SK-N-SH (cell line): ENCODE measurements at regions of chr16 and their contacts with region 1.

Region 1: GRCh38 chr16:77584205-77584859 is 138.0 kb upstream of the NUDT7 start:
- DNase-seq: peak; percentile 55
- H3K4me3 ChIP-seq: no peak overlapping the region; a peak in 1 of 4 replicates
- H3K27ac ChIP-seq: no peak overlapping the region
- H3K4me1 ChIP-seq: no peaks in the 10 kb centered on the region; a peak in 1 of 4 replicates
- H3K27me3 ChIP-seq: no peaks in the 10 kb centered on the region
- CTCF ChIP-seq: peak; percentile 95
- EP300 ChIP-seq: no peak
- RAD21 ChIP-seq: peak; percentile 93

Region 2: DNA sequence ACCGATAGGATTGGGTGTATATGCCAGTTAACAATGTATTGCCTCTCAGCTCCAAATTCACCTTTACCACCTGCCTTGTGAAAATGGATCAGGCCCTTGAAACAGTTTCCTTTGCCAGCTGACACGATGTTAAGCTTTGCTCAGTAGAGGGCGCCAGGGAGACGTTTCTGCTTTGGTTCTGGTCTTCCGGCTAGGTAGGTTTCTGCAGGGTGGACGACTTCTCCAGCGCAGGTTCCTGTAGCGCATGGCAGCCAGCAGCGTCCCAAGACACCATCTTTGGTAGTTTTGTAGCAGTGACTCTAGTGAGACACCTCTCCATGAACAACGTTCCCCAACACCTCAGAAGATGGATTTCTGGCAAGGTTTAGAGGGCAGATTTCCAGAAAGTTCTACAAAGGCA is 361.1 kb before region 1 on chr16:
- CTCF ChIA-PET with region 1: interaction called, 15 read pairs
- POLR2A ChIA-PET with region 1: no interaction called
- DNase-seq: peak; percentile 35
- H3K4me3 ChIP-seq: no peak overlapping the region; a peak in 1 of 4 replicates
- H3K27ac ChIP-seq: no peak overlapping the region
- H3K4me1 ChIP-seq: no peaks in the 10 kb centered on the region
- H3K27me3 ChIP-seq: no peaks in the 10 kb centered on the region
- CTCF ChIP-seq: peak; percentile 53
- EP300 ChIP-seq: no peak
- RAD21 ChIP-seq: no peak

Region 3: DNA sequence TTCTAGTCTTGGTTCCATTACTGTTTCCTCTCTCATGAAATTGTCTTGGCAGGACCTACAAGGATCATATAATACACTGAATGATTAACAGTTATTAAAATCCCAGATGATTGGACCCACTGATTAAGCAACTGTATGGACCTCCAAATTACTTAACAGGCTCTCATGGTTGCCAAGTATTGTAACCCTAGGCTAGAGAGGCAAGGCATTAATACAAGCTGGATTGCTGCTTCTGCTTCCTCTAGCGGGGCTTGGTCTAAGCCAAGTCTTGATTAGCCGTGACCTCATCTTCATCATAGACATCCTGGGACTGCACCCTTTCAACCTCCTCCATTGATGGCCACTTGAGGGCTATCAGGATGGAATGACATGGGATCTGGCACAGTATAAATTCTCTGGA is 338.2 kb before region 1 on chr16:
- CTCF ChIA-PET with region 1: interaction called, 14 read pairs
- POLR2A ChIA-PET with region 1: no interaction called
- DNase-seq: no peak
- H3K4me3 ChIP-seq: no peak overlapping the region
- H3K27ac ChIP-seq: no peak overlapping the region
- H3K4me1 ChIP-seq: no peaks in the 10 kb centered on the region
- H3K27me3 ChIP-seq: no peaks in the 10 kb centered on the region
- CTCF ChIP-seq: no peak
- EP300 ChIP-seq: no peak
- RAD21 ChIP-seq: no peak

Region 4: GRCh38 chr16:77569406-77569805 is 14.9 kb before region 1 on chr16:
- CTCF ChIA-PET with region 1: interaction called, 47 read pairs
- POLR2A ChIA-PET with region 1: interaction called, 3 read pairs
- DNase-seq: no peak
- H3K4me3 ChIP-seq: no peak overlapping the region
- H3K27ac ChIP-seq: no peak overlapping the region
- H3K4me1 ChIP-seq: no peaks in the 10 kb centered on the region
- H3K27me3 ChIP-seq: no peaks in the 10 kb centered on the region
- CTCF ChIP-seq: no peak
- EP300 ChIP-seq: no peak
- RAD21 ChIP-seq: no peak

Region 5: GRCh38 chr16:77660311-77660710 is 76.0 kb after region 1 on chr16:
- CTCF ChIA-PET with region 1: interaction called, 22 read pairs
- POLR2A ChIA-PET with region 1: no interaction called
- DNase-seq: peak; percentile 45
- H3K4me3 ChIP-seq: peak overlapping the region; percentile 5 to 53; a peak in 3 of 4 replicates
- H3K27ac ChIP-seq: no peak overlapping the region
- H3K4me1 ChIP-seq: peaks cover 0 to 3% of the 10 kb centered on the region in 2 experiments; a peak in 1 of 4 replicates
- H3K27me3 ChIP-seq: no peaks in the 10 kb centered on the region
- CTCF ChIP-seq: peak; percentile 66
- EP300 ChIP-seq: no peak
- RAD21 ChIP-seq: peak; percentile 59

Region 6: GRCh38 chr16:77675464-77676324 is 91.4 kb after region 1 on chr16:
- CTCF ChIA-PET with region 1: no interaction called
- POLR2A ChIA-PET with region 1: no interaction called
- DNase-seq: peak; percentile 79
- H3K4me3 ChIP-seq: peak overlapping the region in 1 of 2 experiments; percentile 27; a peak in 2 of 4 replicates
- H3K27ac ChIP-seq: no peak overlapping the region
- H3K4me1 ChIP-seq: no peaks in the 10 kb centered on the region
- H3K27me3 ChIP-seq: no peaks in the 10 kb centered on the region
- CTCF ChIP-seq: peak; percentile 95
- EP300 ChIP-seq: no peak
- RAD21 ChIP-seq: peak; percentile 99

Region 7: GRCh38 chr16:77788181-77789084 is 204.1 kb after region 1 on chr16 and contains the start of gene VAT1L:
- CTCF ChIA-PET with region 1: no interaction called
- POLR2A ChIA-PET with region 1: no interaction called
- DNase-seq: peak; percentile 89
- H3K4me3 ChIP-seq: peak within 1 kb of the TSS; percentile 81 to 95
- H3K27ac ChIP-seq: peak within 1 kb of the TSS in 1 of 2 experiments; percentile 64; a peak in 1 of 4 replicates
- H3K4me1 ChIP-seq: peaks cover 6 to 12% of the 10 kb centered on the region in 2 experiments; a peak in 3 of 4 replicates
- H3K27me3 ChIP-seq: no peaks in the 10 kb centered on the region
- CTCF ChIP-seq: no peak
- EP300 ChIP-seq: no peak
- RAD21 ChIP-seq: no peak
- polyA plus RNA-seq, gene VAT1L: 52.5 and 62.2 TPM in 2 replicates